A549 (cell line): ENCODE measurements at regions of chr10 and their contacts with region 1.

Region 1: DNA sequence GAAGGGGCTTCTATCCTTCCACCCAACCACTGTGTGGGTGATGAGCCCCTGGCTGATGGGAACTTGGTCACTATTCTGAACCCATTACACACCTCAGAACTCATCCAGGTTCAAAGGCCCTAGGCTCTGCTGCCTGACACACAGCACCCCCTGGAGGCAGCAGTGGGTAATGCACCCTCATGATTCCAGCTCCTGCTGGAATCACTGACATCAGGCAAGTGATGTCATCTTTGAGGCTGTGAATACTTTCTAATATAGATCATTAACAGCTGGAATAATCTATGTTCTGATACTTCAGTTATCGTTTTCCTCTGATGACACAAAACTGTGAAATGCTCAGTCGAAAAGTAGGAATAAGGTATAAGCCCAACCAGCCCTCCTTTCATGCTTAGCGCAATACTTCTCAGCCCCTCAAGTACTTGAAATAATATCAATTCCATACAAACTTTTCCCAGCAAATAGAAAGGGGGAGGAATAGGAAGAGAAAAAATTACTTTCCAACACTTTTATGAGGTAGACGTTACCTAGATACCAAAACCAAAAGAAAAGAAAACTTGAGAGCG is 7.5 kb upstream of the RBP3 start:
- DNase-seq: peak; percentile 67 to 87
- ATAC-seq: peak; percentile 77 to 88
- H3K4me3 ChIP-seq: no peak overlapping the region
- H3K27ac ChIP-seq: no peak overlapping the region
- H3K4me1 ChIP-seq: no peaks in the 10 kb centered on the region
- CTCF ChIP-seq: peak; percentile 87
- EP300 ChIP-seq: no peak
- POLR2A ChIP-seq: no peak
- RAD21 ChIP-seq: peak; percentile 66 to 79

Region 2: GRCh38 chr10:47326306-47326926 is 14.3 kb before region 1 on chr10:
- CTCF ChIA-PET with region 1: interaction called, 24 read pairs
- POLR2A ChIA-PET with region 1: no interaction called
- DNase-seq: no peak
- ATAC-seq: no peak
- H3K4me3 ChIP-seq: no peak overlapping the region
- H3K27ac ChIP-seq: no peak overlapping the region
- H3K4me1 ChIP-seq: peaks cover 6% of the 10 kb centered on the region; the same call in 1 of the 3 replicates
- CTCF ChIP-seq: no peak
- EP300 ChIP-seq: no peak
- POLR2A ChIP-seq: no peak
- RAD21 ChIP-seq: no peak

Region 3: DNA sequence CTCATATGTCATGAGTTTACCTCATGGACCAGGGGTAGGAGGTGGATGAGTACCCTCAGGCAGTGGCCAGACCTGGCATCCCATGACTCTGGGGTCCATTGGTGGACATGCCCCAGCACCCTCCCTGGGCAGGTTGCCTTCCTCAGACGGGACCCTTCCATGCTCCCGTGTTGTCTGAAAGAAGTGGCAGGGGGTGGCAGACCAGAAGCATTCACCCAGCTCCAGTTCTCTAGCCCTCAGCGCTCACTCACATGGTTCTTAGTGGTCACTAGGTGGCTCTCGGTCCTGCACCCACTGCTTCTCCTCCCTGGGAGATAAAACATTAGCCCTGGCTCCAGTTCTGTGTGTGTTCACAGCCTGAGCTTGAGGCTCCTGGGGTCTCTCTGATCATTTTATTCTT is 13.5 kb after region 1 on chr10:
- CTCF ChIA-PET with region 1: interaction called, 17 read pairs
- POLR2A ChIA-PET with region 1: no interaction called
- DNase-seq: peak; percentile 45 to 51
- ATAC-seq: peak; percentile 74 to 85; a peak in 5 of 6 replicates
- H3K4me3 ChIP-seq: no peak overlapping the region
- H3K27ac ChIP-seq: no peak overlapping the region
- H3K4me1 ChIP-seq: no peaks in the 10 kb centered on the region
- CTCF ChIP-seq: peak; percentile 40
- EP300 ChIP-seq: no peak
- POLR2A ChIP-seq: no peak
- RAD21 ChIP-seq: peak; percentile 58 to 60